Breast epithelium (tissue), 4 donors: ENCODE measurements at regions of chr9 and their contacts with region 1.

Region 1: GRCh38 chr9:132615774-132616173 is 33.4 kb downstream of the BARHL1 start:
- DNase-seq: no peak
- H3K4me3 ChIP-seq: no peak overlapping the region
- H3K27ac ChIP-seq: no peak overlapping the region
- H3K4me1 ChIP-seq: no peaks in the 10 kb centered on the region
- H3K27me3 ChIP-seq: no peaks in the 10 kb centered on the region
- CTCF ChIP-seq: no peak
- POLR2A ChIP-seq: no peak

Region 2: DNA sequence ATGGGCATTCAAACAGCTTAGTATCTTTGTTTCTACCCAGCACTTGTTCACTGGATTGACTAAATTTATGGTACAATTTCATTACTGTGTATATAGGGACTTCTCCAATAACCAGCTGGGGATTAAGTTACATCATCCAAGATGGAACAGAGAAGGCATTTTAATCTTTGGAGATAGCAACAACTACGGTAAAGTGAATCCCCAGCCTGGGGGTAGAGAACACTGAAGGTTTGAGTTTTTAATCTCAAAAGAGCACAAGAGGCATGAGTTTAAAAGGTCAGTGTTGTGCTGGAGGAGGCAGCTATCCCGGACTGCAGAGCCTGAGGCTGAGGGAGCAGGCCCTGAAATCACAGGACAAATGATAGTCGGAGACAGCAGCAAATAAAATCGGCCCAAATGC is 25.4 kb after region 1 on chr9:
- intact Hi-C with region 1: loop called (anchors 2 kb)
- DNase-seq: no peak
- H3K4me3 ChIP-seq: no peak overlapping the region
- H3K27ac ChIP-seq: peak overlapping the region; percentile 4 to 73
- H3K4me1 ChIP-seq: peaks cover 0 to 4% of the 10 kb centered on the region in 2 donors
- H3K27me3 ChIP-seq: no peaks in the 10 kb centered on the region
- CTCF ChIP-seq: no peak
- POLR2A ChIP-seq: no peak